ENCODE measurements at regions of chr9 and their contacts with region 1.

Region 1: GRCh38 chr9:115944166-115944948 is 209.2 kb upstream of the PAPPA start:
- DNase-seq: peak; percentile 53 to 91 (median 69)
- ATAC-seq: peak; percentile 93 to 97 (median 96)
- H3K4me3 ChIP-seq: no peak overlapping the region
- H3K27ac ChIP-seq: peak overlapping the region; percentile 63 to 91 (median 80)
- H3K4me1 ChIP-seq: peaks cover 0 to 29% (median 17%) of the 10 kb centered on the region in 12 donors
- H3K27me3 ChIP-seq: no peaks in the 10 kb centered on the region
- CTCF ChIP-seq: no peak
- POLR2A ChIP-seq: no peak

Region 2: DNA sequence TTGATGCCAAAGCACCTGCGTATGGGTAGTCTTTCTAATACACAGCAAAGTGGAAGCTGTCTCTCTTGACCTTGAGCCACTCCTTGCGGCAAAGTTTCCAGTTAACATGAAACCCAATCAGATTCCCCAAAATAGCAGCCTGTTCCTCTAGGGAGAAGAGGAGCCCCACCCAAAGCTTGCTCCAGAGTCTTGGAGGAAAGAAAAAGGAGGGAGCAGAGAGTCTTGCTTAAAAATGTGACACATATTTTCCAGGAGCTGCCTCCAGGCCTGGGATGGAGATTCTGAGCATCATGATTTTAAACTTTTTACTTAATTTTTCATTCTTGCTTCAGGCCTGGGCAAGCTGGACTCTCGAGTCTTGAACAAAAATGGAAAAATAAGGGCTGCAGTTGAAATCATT is 602.9 kb before region 1 on chr9:
- intact Hi-C with region 1: no loop called
- DNase-seq: peak in 3 of 5 donors; percentile 8 to 27 (median 21)
- ATAC-seq: peak; percentile 37 to 68 (median 54)
- H3K4me3 ChIP-seq: no peak overlapping the region
- H3K27ac ChIP-seq: no peak overlapping the region
- H3K4me1 ChIP-seq: peaks cover 0 to 8% (median 0%) of the 10 kb centered on the region in 12 donors
- H3K27me3 ChIP-seq: no peaks in the 10 kb centered on the region
- CTCF ChIP-seq: no peak
- POLR2A ChIP-seq: no peak

Region 3: GRCh38 chr9:115385406-115386122 is 558.8 kb before region 1 on chr9:
- intact Hi-C with region 1: no loop called
- DNase-seq: no peak
- ATAC-seq: no peak
- H3K4me3 ChIP-seq: no peak overlapping the region
- H3K27ac ChIP-seq: no peak overlapping the region
- H3K4me1 ChIP-seq: no peaks in the 10 kb centered on the region
- H3K27me3 ChIP-seq: no peaks in the 10 kb centered on the region
- CTCF ChIP-seq: no peak
- POLR2A ChIP-seq: no peak

Region 4: GRCh38 chr9:115891929-115892328 is 52.4 kb before region 1 on chr9:
- intact Hi-C with region 1: no loop called
- DNase-seq: no peak
- ATAC-seq: no peak
- H3K4me3 ChIP-seq: no peak overlapping the region
- H3K27ac ChIP-seq: no peak overlapping the region
- H3K4me1 ChIP-seq: no peaks in the 10 kb centered on the region
- H3K27me3 ChIP-seq: no peaks in the 10 kb centered on the region
- CTCF ChIP-seq: no peak
- POLR2A ChIP-seq: no peak

Region 5: GRCh38 chr9:116087246-116087645 is 142.9 kb after region 1 on chr9:
- intact Hi-C with region 1: loop called in 2 of 10 experiments (anchors 5 to 10 kb)
- DNase-seq: peak in 4 of 5 donors; percentile 25 to 72 (median 50)
- ATAC-seq: peak; percentile 91 to 94 (median 94)
- H3K4me3 ChIP-seq: no peak overlapping the region
- H3K27ac ChIP-seq: peak overlapping the region in 11 of 12 donors; percentile 6 to 68 (median 52)
- H3K4me1 ChIP-seq: peaks cover 0 to 20% (median 5%) of the 10 kb centered on the region in 12 donors
- H3K27me3 ChIP-seq: no peaks in the 10 kb centered on the region
- CTCF ChIP-seq: no peak
- POLR2A ChIP-seq: no peak

Region 6: DNA sequence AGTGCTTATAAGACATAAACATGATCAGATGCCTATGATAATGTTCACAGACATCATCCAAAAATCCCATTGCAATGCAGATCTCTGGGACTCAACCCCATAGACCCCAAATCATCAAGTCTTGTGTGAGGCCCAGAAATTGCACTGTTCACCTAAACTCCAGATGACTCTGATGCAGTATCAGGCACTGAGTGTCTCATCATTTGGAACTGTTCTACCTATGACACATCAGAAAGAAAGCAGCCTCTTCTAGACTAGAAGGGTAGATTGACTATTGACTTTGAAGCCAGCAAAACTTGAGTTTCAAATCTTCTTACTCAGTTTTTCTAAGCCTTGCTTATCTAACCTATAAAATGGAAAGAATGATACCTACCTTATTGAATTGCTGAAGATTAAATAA is 150.5 kb after region 1 on chr9:
- intact Hi-C with region 1: loop called in 1 of 10 experiments (anchors 5 kb)
- DNase-seq: no peak
- ATAC-seq: no peak
- H3K4me3 ChIP-seq: no peak overlapping the region
- H3K27ac ChIP-seq: no peak overlapping the region
- H3K4me1 ChIP-seq: no peaks in the 10 kb centered on the region
- H3K27me3 ChIP-seq: no peaks in the 10 kb centered on the region
- CTCF ChIP-seq: no peak
- POLR2A ChIP-seq: no peak